ENCODE measurements at regions of chr2 and their contacts with region 1.

Region 1: GRCh38 chr2:86195055-86195807 is at the start of gene IMMT:
- DNase-seq: peak; percentile 98
- H3K4me3 ChIP-seq: peak within 1 kb of the TSS; percentile 68
- H3K4me3 Mint-ChIP-seq: peak within 1 kb of the TSS; percentile 84
- H3K27ac Mint-ChIP-seq: peak within 1 kb of the TSS; percentile 81
- H3K4me1 ChIP-seq: peaks cover 9% of the 10 kb centered on the region; the same call in 1 of the 2 replicates
- H3K4me1 Mint-ChIP-seq: peaks cover 27% of the 10 kb centered on the region
- H3K27me3 ChIP-seq: no peaks in the 10 kb centered on the region
- H3K27me3 Mint-ChIP-seq: no peaks in the 10 kb centered on the region
- CTCF ChIP-seq: no peak
- total RNA-seq, gene IMMT: 125 and 129 TPM in 2 replicates

Region 2: DNA sequence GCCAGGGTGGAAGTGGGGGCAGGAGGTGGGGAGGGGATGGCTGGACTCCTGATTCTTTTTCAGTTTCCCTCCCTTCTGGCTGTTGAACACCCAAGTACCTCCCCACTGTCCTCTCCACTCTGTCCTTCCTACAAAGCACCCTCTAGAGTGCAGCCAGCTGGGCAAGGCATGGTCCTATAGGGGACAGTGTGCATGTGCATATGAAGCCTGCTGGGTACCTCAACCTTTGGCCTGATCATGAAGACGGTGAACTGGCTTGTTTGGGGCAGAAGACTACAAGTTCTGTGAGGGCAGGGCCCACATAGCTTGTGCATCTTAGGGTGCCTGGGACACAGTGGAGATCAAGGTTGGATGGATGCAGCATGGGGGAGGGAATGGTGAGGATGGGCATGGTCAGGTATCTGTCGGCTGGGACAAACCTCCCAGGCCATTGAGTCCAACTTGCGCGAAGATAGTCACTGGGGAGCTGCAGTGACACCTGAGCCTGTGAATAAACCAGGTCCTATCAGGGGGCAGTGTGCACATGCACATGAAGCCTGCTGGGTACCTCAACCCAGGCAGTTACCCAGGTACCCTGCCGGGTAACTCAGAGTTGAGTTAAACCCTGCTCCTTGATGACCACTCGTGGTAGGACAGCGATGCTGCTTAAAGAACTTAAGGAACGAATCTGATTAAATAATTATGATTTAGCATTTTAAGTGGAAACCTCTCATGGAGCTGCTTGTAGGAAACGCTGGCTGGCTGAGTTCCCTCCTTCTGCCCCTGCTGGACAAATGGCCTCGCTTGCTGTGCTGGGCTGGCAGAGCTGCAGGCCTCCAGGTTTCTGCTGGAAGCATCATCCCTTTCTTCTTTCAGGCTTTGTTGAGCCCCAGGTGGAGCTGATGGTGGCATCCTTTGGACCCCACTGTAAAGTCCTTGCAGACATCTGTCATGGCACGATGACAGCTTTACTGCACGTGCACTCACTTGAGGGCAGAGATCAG is 173.5 kb before region 1 on chr2:
- CTCF ChIA-PET with region 1: no interaction called
- POLR2A ChIA-PET with region 1: no interaction called
- intact Hi-C with region 1: no loop called
- DNase-seq: no peak
- H3K4me3 ChIP-seq: no peak overlapping the region
- H3K4me3 Mint-ChIP-seq: no peak overlapping the region
- H3K27ac Mint-ChIP-seq: no peak overlapping the region
- H3K4me1 ChIP-seq: peaks cover 7% of the 10 kb centered on the region; the same call in 1 of the 2 replicates
- H3K4me1 Mint-ChIP-seq: peaks cover 7% of the 10 kb centered on the region
- H3K27me3 ChIP-seq: no peaks in the 10 kb centered on the region
- H3K27me3 Mint-ChIP-seq: no peaks in the 10 kb centered on the region
- CTCF ChIP-seq: peak in 1 of 2 experiments; percentile 26

Region 3: GRCh38 chr2:86105252-86105968 is 89.8 kb before region 1 on chr2 and contains the start of gene POLR1A:
- CTCF ChIA-PET with region 1: interaction called, 3 read pairs
- POLR2A ChIA-PET with region 1: interaction called, 9 read pairs
- intact Hi-C with region 1: loop called (anchors 5 kb)
- DNase-seq: peak; percentile 91 to 94
- H3K4me3 ChIP-seq: peak within 1 kb of the TSS; percentile 90
- H3K4me3 Mint-ChIP-seq: peak within 1 kb of the TSS; percentile 91
- H3K27ac Mint-ChIP-seq: peak within 1 kb of the TSS; percentile 98
- H3K4me1 ChIP-seq: peaks cover 9% of the 10 kb centered on the region
- H3K4me1 Mint-ChIP-seq: peaks cover 30% of the 10 kb centered on the region
- H3K27me3 ChIP-seq: no peaks in the 10 kb centered on the region
- H3K27me3 Mint-ChIP-seq: no peaks in the 10 kb centered on the region
- CTCF ChIP-seq: no peak
- total RNA-seq, gene POLR1A: 73.8 and 79.5 TPM in 2 replicates

Region 4: DNA sequence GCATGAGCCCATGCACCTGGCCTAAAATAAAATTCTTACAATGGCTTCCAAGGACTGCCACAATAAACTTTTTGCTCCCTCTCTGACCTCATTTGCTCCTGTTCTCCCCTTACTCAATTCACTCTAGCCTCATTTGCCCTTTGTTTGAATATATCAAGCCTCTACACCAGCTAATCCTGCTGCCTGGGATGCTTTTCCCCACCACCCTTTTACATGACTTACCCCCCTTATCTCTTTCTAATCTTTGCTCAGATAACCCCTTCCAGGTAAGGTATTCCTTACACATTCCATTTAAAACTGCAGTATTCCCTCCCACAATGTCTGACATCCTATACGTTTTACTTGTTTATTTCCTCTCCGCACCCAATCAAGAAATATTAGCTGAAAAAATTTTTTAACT is 22.6 kb before region 1 on chr2:
- CTCF ChIA-PET with region 1: no interaction called
- POLR2A ChIA-PET with region 1: interaction called, 3 read pairs
- intact Hi-C with region 1: loop called (anchors 2 kb)
- DNase-seq: peak; percentile 69 to 76
- H3K4me3 ChIP-seq: no peak overlapping the region
- H3K4me3 Mint-ChIP-seq: peak overlapping the region; percentile 8
- H3K27ac Mint-ChIP-seq: peak overlapping the region; percentile 32
- H3K4me1 ChIP-seq: peaks cover 41% of the 10 kb centered on the region
- H3K4me1 Mint-ChIP-seq: peaks cover 46% of the 10 kb centered on the region
- H3K27me3 ChIP-seq: no peaks in the 10 kb centered on the region
- H3K27me3 Mint-ChIP-seq: no peaks in the 10 kb centered on the region
- CTCF ChIP-seq: no peak

Region 5: DNA sequence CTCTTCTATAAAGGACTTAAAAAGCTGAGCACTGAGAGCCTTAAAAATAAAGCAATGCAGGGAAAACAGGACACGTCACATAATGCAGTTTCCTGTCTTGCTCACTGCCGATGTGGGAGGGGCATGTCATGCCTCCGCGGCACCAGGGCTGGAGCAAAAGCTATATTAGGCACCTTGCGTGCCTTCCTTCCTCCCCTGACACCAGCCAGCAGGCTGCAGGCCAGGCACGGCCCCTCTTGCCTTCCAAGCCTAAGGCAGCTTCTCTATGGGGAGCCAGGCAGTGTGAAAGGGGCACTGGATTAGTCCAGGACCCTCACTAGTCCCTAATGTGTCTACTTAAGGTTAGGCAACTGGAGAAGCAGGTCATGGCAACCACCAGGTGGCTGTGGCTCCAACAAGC is 30.4 kb after region 1 on chr2:
- CTCF ChIA-PET with region 1: no interaction called
- POLR2A ChIA-PET with region 1: no interaction called
- intact Hi-C with region 1: no loop called
- DNase-seq: no peak
- H3K4me3 ChIP-seq: no peak overlapping the region
- H3K4me3 Mint-ChIP-seq: no peak overlapping the region
- H3K27ac Mint-ChIP-seq: no peak overlapping the region
- H3K4me1 ChIP-seq: no peaks in the 10 kb centered on the region
- H3K4me1 Mint-ChIP-seq: peaks cover 21% of the 10 kb centered on the region
- H3K27me3 ChIP-seq: no peaks in the 10 kb centered on the region
- H3K27me3 Mint-ChIP-seq: no peaks in the 10 kb centered on the region
- CTCF ChIP-seq: no peak